B cell (primary cell): ENCODE measurements at regions of chr4 and their contacts with region 1.

Region 1: GRCh38 chr4:167035390-167035789 is 198.9 kb downstream of the SPOCK3 start:
- DNase-seq: no peak
- ATAC-seq: no peak
- H3K4me3 ChIP-seq: no peak overlapping the region
- H3K4me3 Mint-ChIP-seq: no peak overlapping the region
- H3K27ac ChIP-seq: no peak overlapping the region
- H3K27ac Mint-ChIP-seq: no peak overlapping the region
- H3K4me1 ChIP-seq: no peaks in the 10 kb centered on the region
- H3K4me1 Mint-ChIP-seq: no peaks in the 10 kb centered on the region
- H3K27me3 ChIP-seq: no peaks in the 10 kb centered on the region
- H3K27me3 Mint-ChIP-seq: no peaks in the 10 kb centered on the region
- CTCF ChIP-seq: no peak

Region 2: DNA sequence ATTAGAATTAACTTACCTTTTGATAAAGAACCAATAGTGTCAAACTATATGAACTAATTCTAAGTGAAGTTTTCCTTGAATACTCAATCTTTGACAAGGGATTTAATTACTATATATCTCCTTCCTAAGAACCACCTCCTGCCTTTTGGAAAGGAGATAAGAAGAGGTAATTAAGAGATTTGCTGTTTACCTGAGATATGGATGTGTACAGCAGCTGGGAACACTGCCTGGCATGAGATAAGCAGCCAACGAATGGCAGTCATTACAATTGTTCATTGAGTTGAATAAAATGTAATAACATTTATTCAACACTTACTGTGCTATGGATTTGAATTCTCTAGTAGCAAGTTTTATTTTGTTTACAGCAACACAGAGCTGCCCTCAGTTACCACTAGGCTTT is 208.2 kb before region 1 on chr4:
- CTCF ChIA-PET with region 1: no interaction called
- POLR2A ChIA-PET with region 1: no interaction called
- intact Hi-C with region 1: no loop called
- DNase-seq: no peak
- ATAC-seq: no peak
- H3K4me3 ChIP-seq: no peak overlapping the region
- H3K4me3 Mint-ChIP-seq: no peak overlapping the region
- H3K27ac ChIP-seq: no peak overlapping the region
- H3K27ac Mint-ChIP-seq: no peak overlapping the region
- H3K4me1 ChIP-seq: no peaks in the 10 kb centered on the region
- H3K4me1 Mint-ChIP-seq: no peaks in the 10 kb centered on the region
- H3K27me3 ChIP-seq: no peaks in the 10 kb centered on the region
- H3K27me3 Mint-ChIP-seq: no peaks in the 10 kb centered on the region
- CTCF ChIP-seq: no peak

Region 3: DNA sequence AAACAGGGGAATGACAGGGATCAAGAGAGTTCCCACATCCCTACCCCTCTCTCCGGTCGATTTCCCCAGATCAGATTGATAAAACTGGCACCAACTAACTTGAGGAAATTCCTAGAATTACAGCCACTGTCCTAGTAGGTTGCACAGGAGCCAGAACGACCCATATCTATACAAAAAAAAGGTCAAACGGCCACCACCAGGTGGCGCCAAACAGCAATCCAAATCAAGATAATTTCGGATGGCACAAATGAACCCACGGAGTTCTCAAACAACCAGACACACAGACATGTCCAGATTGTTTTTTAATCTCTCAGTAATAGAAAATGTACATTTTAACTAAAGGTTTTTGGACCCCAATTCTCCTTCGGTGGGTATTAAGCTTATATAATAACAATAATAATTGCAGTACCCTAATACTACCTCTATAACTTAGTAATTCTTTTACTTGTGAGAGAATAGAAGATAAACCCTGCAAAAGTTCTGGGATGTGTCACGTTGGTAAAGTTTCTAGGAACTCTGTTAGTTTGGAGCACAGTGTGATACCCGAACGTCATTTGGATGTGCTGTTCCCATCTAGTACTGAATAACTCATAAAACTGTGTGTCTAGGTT is 13.7 kb before region 1 on chr4:
- CTCF ChIA-PET with region 1: interaction called, 18 read pairs
- POLR2A ChIA-PET with region 1: no interaction called
- intact Hi-C with region 1: no loop called
- DNase-seq: peak; percentile 55
- ATAC-seq: no peak
- H3K4me3 ChIP-seq: no peak overlapping the region
- H3K4me3 Mint-ChIP-seq: no peak overlapping the region
- H3K27ac ChIP-seq: no peak overlapping the region
- H3K27ac Mint-ChIP-seq: no peak overlapping the region
- H3K4me1 ChIP-seq: no peaks in the 10 kb centered on the region
- H3K4me1 Mint-ChIP-seq: peaks cover 1% of the 10 kb centered on the region
- H3K27me3 ChIP-seq: no peaks in the 10 kb centered on the region
- H3K27me3 Mint-ChIP-seq: no peaks in the 10 kb centered on the region
- CTCF ChIP-seq: peak; percentile 95